ENCODE measurements at regions of chr2 and their contacts with region 1.

Region 1: GRCh38 chr2:72150157-72150865 is 2.6 kb upstream of the CYP26B1 start:
- DNase-seq: peak in 1 of 2 experiments; percentile 95
- H3K4me3 ChIP-seq: peak overlapping the region; percentile 49 to 56 (median 52); a peak in 7 of 8 replicates
- H3K27ac ChIP-seq: no peak overlapping the region
- H3K4me1 ChIP-seq: peaks cover 7 to 28% (median 16%) of the 10 kb centered on the region in 4 experiments
- H3K27me3 ChIP-seq: peaks cover 36 to 62% (median 58%) of the 10 kb centered on the region in 4 experiments
- CTCF ChIP-seq: peak in 2 of 3 experiments; percentile 79 to 89; a peak in 3 of 4 replicates
- EP300 ChIP-seq: no peak
- POLR2A ChIP-seq: no peak
- RAD21 ChIP-seq: peak; percentile 92 to 93

Region 2: GRCh38 chr2:71876542-71877451 is 273.5 kb before region 1 on chr2:
- CTCF ChIA-PET with region 1: interaction called, 10 read pairs
- POLR2A ChIA-PET with region 1: no interaction called
- DNase-seq: no peak
- H3K4me3 ChIP-seq: no peak overlapping the region
- H3K27ac ChIP-seq: no peak overlapping the region
- H3K4me1 ChIP-seq: no peaks in the 10 kb centered on the region; a peak in 1 of 7 replicates
- H3K27me3 ChIP-seq: no peaks in the 10 kb centered on the region
- CTCF ChIP-seq: no peak
- EP300 ChIP-seq: no peak
- POLR2A ChIP-seq: no peak
- RAD21 ChIP-seq: no peak

Region 3: DNA sequence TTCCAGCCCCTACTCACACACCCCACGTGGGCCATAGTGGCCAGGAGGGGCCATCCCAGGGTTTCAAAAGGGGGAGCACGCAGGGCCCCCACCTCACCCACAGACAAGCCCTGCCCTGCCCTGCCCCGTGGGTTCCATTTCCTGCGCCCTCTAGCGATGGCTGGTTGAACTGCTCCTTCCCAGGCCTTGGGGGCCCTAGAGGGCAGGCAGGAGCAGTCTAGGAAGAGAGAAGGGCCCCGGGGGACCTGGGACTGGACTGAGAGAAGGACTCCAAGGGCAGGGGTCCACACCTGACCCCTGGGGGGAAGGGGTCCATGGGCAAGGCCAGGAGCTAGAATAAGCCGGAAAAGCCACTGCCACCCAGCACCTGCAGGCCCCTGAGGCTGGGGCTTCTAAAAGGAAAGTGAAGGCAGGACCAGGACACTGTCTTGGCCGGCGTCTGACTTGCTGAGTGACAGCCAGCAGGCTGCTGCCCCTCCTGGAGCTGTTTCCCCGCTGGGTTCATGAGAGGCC is 12.8 kb before region 1 on chr2:
- CTCF ChIA-PET with region 1: interaction called, 20 read pairs
- POLR2A ChIA-PET with region 1: no interaction called
- DNase-seq: peak in 1 of 2 experiments; percentile 98
- H3K4me3 ChIP-seq: no peak overlapping the region
- H3K27ac ChIP-seq: no peak overlapping the region
- H3K4me1 ChIP-seq: peaks cover 0 to 11% (median 6%) of the 10 kb centered on the region in 4 experiments; a peak in 5 of 7 replicates
- H3K27me3 ChIP-seq: peaks cover 12 to 32% (median 29%) of the 10 kb centered on the region in 4 experiments
- CTCF ChIP-seq: peak in 2 of 3 experiments; percentile 90 to 98; a peak in 3 of 4 replicates
- EP300 ChIP-seq: no peak
- POLR2A ChIP-seq: no peak
- RAD21 ChIP-seq: peak; percentile 59 to 70

Region 4: DNA sequence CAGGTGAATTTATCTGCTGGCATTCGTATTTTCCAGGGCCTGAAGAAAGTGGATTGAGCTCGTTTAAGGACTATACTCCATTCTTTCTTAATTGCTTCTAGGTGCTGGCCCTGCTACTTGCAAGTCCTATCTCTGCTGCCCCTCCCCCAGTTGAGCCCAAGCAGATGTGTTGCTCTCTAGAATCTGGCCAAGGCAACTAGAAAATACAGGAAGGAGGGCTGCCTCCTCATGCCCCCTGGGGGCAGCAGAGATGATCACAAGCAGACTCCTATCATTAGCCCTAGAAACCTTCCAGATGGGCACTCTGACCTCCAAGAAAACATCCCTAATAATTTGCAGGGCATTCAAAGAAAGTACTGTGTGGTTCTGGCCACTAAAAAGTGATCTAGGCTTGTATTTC is 69.9 kb after region 1 on chr2:
- CTCF ChIA-PET with region 1: interaction called, 10 read pairs
- POLR2A ChIA-PET with region 1: no interaction called
- DNase-seq: peak; percentile 67 to 80
- H3K4me3 ChIP-seq: no peak overlapping the region
- H3K27ac ChIP-seq: no peak overlapping the region
- H3K4me1 ChIP-seq: peaks cover 0 to 4% (median 0%) of the 10 kb centered on the region in 4 experiments; a peak in 1 of 7 replicates
- H3K27me3 ChIP-seq: no peaks in the 10 kb centered on the region
- CTCF ChIP-seq: peak; percentile 42 to 74 (median 59)
- EP300 ChIP-seq: peak in 1 of 2 experiments; percentile 50; a peak in 1 of 3 replicates
- POLR2A ChIP-seq: no peak
- RAD21 ChIP-seq: peak; percentile 54 to 68

Region 5: GRCh38 chr2:72579591-72580180 is 429.4 kb after region 1 on chr2:
- CTCF ChIA-PET with region 1: interaction called, 28 read pairs
- POLR2A ChIA-PET with region 1: no interaction called
- DNase-seq: no peak
- H3K4me3 ChIP-seq: no peak overlapping the region
- H3K27ac ChIP-seq: no peak overlapping the region
- H3K4me1 ChIP-seq: no peaks in the 10 kb centered on the region
- H3K27me3 ChIP-seq: no peaks in the 10 kb centered on the region
- CTCF ChIP-seq: peak in 2 of 3 experiments; percentile 39 to 48; a peak in 2 of 4 replicates
- EP300 ChIP-seq: no peak
- POLR2A ChIP-seq: no peak
- RAD21 ChIP-seq: peak; percentile 77 to 85